ENCODE measurements at regions of chr7 and their contacts with region 1.

Region 1: DNA sequence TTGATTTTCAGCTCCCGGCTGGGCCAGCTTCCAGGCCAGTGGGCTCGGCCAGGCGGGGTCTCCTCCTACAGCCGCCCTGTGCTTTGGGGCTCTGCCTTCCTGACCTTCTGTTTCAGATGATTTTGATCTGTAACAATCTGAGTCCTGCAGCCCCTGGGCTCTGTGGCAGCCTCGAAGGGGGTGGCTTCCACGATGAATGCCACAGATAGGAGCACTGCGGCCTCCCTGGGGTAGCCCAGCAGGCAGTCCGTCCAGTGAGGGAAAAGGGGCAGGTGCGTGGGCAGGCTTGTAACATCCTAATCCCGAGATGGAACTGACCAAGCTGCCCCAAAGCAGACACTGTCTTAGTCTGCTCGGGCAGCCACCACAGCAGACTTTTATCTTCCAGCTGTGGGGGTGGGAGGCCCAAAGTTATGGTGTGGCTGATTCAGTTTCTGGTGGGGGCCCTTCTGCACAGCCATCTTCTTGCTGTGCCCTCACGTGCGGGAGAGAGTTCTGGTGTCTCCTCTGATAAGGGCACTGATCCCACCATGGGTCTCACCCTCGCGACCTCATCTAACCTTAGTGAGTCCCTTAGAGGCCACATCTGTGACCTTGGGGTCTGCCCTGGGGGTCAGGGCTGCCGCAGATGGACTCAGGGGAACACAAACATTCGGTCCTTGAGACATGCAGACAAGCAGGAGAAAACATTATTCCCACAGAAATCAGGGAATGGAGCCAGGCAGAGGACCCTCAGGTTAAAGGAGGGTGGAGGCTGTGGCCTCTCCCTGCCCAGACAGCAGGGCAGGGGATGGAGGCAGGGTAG is 177.7 kb downstream of the DNAJB6 start:
- DNase-seq: peak in 1 of 2 donors; percentile 38
- H3K4me3 ChIP-seq: no peak overlapping the region
- H3K27ac ChIP-seq: no peak overlapping the region
- H3K4me1 ChIP-seq: no peaks in the 10 kb centered on the region
- H3K27me3 ChIP-seq: peaks cover 0 to 19% of the 10 kb centered on the region in 2 donors
- CTCF ChIP-seq: no peak
- POLR2A ChIP-seq: no peak

Region 2: DNA sequence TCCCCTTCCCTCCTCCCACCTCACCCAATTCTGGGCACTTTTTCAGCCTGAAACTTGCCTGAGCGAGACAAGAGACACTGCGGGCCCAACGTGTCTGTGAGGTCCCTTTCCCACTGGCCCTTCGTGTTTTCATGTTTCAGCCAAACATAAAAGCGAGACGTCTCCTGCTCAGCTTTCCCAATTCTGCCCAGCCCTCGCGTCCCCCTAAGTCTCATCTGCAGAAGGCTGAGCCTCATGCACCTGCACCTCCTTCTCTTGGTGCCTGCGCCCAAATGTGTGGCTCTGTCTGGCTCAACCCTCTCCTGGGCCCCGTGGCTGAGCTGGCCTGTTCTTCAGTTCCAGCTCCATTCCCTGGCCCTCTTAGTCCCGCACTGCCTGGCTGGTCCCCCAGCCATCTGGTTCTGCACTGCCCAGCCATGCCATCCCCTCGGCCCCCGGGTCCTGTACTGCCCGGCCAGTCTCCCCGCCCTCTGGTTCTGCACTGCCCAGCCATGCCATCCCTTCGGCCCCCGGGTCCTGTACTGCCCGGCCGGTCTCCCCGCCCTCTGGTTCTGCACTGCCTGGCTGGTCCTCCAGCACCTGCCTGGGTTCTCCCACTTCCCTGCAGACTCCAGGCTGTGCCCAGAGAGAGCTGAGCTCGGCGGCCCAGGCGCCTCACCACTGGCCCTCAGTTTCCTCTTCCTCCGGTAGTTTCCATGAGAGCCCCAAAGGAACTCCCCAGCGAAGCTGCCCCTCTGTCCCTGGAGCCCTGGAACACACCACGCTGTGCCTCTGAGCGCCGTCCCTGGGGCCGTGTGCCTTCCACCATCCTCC is 46.4 kb after region 1 on chr7:
- intact Hi-C with region 1: loop called (anchors 1 kb)
- DNase-seq: no peak
- H3K4me3 ChIP-seq: no peak overlapping the region
- H3K27ac ChIP-seq: no peak overlapping the region
- H3K4me1 ChIP-seq: no peaks in the 10 kb centered on the region
- H3K27me3 ChIP-seq: no peaks in the 10 kb centered on the region
- CTCF ChIP-seq: no peak
- POLR2A ChIP-seq: no peak

Region 3: DNA sequence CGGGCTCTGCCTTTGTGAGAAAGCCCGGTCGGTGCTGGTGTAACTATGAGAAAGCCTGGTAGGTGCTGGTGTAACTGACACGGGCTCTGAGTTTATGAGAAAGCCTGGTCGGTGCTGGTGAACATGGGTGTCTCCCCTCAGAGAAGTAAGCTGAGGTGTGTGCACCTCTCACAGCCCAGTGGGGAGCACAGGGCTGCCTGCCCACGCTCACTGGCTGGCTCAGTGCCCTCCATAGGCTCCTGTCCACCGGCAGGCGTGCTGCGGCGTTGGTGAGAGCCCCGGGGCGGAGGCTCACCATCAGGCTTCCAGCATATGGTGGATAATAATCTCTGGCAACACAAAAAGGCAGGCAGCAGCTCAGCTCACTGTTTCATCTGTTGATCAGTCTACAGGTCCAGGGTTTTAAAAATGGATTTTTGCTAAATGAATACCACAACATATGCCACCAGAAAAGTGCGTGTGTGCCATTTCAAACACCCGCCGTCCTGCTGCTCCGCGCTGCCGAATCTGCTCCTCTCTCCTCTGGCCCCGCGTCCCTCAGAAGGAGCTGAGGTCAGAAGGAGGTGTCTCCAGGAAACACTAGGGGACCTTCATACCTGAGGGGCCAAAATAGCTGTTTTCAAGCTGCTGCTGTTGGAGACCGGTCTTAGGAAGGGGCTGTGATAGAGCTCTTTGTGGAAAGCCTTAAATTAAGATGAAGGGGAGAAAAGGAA is 187.9 kb after region 1 on chr7:
- intact Hi-C with region 1: no loop called
- DNase-seq: no peak
- H3K4me3 ChIP-seq: no peak overlapping the region
- H3K27ac ChIP-seq: no peak overlapping the region
- H3K4me1 ChIP-seq: no peaks in the 10 kb centered on the region
- H3K27me3 ChIP-seq: peaks cover 0 to 63% of the 10 kb centered on the region in 2 donors
- CTCF ChIP-seq: no peak
- POLR2A ChIP-seq: no peak

Measured in breast epithelium (tissue), 4 donors.